Activated CD8-positive, alpha-beta T cell treated with anti-CD3 and anti-CD28 coated beads, Interleukin-2, amount 10 ng/mL, durations not matched to agents 7 days and 5 days (primary cell): ENCODE measurements at regions of chr12 and their contacts with region 1.

Region 1: GRCh38 chr12:6461401-6462233 is 8.9 kb downstream of the VAMP1 start:
- DNase-seq: peak; percentile 95
- ATAC-seq: peak; percentile 79
- H3K4me3 Mint-ChIP-seq: peak overlapping the region; percentile 71
- H3K27ac Mint-ChIP-seq: peak overlapping the region; percentile 99
- H3K4me1 Mint-ChIP-seq: peaks cover 92% of the 10 kb centered on the region
- H3K27me3 Mint-ChIP-seq: no peaks in the 10 kb centered on the region

Region 2: DNA sequence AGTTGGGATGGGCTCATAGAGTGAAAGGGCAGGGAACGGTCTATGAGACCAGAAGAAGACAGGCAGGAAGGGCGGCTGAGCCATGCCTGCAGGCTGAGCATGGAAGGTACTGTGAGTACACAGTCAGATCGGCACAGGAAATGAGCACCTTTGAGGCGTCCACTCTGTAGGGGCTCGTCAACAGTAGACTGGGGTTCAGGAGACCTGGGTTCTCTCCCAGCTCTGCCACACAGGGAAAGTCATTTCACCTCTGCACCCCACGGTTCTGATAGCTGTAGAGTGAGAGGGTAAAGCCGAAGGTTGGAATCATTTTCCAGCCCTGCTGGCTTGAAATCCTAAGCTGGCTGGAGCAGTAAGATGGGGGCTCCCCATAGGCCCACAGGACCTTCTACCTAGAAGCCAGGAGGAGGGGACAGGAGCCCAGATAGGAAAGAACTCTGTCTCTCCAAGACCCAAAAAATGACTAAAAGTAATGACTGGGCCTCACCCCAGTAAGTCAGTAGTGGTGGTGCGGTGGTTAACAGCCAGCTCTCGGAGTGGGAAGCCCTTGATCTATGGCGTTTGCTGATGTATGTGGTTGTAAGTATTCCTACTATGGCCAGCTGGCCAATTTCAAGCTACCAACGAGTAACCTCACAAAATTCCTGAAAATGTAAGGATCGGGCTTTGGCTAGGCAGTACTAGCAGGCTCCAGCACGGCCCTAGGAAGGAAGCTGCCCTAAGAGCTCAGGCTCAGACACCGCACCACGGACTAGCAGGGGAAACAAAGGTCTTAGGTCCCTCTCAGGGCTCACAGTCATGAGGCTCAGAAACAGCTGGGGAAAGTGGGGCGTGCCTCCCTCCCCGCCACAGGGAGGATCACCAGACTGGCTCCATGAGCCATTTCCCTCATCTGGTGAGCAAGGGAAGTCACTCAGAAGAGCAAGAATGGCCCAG is 27.1 kb before region 1 on chr12:
- CTCF ChIA-PET with region 1: interaction called, 39 read pairs
- POLR2A ChIA-PET with region 1: interaction called, 48 read pairs
- DNase-seq: peak; percentile 62
- ATAC-seq: peak; percentile 87
- H3K4me3 Mint-ChIP-seq: peak overlapping the region; percentile 50
- H3K27ac Mint-ChIP-seq: peak overlapping the region; percentile 91
- H3K4me1 Mint-ChIP-seq: peaks cover 54% of the 10 kb centered on the region
- H3K27me3 Mint-ChIP-seq: no peaks in the 10 kb centered on the region

Region 3: DNA sequence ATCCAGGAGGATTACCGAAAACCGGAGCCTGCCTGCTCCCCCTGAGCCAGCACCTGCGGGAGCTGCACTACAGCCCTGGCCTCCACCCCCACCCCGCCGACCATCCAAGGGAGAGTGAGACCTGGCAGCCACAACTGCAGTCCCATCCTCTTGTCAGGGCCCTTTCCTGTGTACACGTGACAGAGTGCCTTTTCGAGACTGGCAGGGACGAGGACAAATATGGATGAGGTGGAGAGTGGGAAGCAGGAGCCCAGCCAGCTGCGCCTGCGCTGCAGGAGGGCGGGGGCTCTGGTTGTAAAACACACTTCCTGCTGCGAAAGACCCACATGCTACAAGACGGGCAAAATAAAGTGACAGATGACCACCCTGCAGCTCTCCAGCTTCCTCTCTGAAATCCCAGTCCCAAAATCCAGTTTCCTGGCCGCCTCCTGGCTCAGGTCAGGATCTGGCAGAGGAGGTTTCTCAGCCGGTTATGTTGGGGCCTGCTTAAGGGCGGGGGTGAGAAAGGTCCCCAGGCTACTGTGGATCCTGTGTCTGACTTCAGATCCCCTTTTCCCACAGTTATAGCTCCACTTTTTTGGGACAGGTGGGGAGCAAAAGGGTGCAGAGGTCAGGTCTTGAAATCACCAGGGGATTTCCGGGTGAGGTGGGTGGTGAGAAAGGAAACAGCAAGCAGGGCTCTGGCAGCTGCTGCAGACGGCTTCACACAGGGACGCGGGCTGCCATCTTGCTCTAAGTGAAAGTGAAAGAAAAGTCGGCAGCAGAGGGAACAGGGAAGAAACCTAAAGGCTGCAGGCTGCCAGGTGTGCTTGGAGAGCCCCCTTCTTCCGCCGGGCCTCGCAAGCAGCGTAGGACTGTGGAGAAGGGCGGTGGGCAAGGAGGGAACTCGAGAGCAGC is 10.0 kb before region 1 on chr12 and contains the start of gene TAPBPL:
- CTCF ChIA-PET with region 1: interaction called, 64 read pairs
- POLR2A ChIA-PET with region 1: interaction called, 103 read pairs
- DNase-seq: peak; percentile 88
- ATAC-seq: peak; percentile 85
- H3K4me3 Mint-ChIP-seq: peak within 1 kb of the TSS; percentile 99
- H3K27ac Mint-ChIP-seq: peak within 1 kb of the TSS; percentile 99
- H3K4me1 Mint-ChIP-seq: peaks cover 78% of the 10 kb centered on the region
- H3K27me3 Mint-ChIP-seq: no peaks in the 10 kb centered on the region
- total RNA-seq, gene TAPBPL: 31.2 to 32.5 TPM

Region 4: DNA sequence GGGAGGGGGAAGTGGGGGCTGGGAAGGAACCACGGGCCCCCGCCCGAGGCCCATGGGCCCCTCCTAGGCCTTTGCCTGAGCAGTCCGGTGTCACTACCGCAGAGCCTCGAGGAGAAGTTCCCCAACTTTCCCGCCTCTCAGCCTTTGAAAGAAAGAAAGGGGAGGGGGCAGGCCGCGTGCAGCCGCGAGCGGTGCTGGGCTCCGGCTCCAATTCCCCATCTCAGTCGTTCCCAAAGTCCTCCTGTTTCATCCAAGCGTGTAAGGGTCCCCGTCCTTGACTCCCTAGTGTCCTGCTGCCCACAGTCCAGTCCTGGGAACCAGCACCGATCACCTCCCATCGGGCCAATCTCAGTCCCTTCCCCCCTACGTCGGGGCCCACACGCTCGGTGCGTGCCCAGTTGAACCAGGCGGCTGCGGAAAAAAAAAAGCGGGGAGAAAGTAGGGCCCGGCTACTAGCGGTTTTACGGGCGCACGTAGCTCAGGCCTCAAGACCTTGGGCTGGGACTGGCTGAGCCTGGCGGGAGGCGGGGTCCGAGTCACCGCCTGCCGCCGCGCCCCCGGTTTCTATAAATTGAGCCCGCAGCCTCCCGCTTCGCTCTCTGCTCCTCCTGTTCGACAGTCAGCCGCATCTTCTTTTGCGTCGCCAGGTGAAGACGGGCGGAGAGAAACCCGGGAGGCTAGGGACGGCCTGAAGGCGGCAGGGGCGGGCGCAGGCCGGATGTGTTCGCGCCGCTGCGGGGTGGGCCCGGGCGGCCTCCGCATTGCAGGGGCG is 72.5 kb after region 1 on chr12 and contains the start of gene GAPDH:
- CTCF ChIA-PET with region 1: interaction called, 14 read pairs
- POLR2A ChIA-PET with region 1: interaction called, 23 read pairs
- DNase-seq: peak; percentile 94
- ATAC-seq: peak; percentile 62
- H3K4me3 Mint-ChIP-seq: peak within 1 kb of the TSS; percentile 99
- H3K27ac Mint-ChIP-seq: peak within 1 kb of the TSS; percentile 100
- H3K4me1 Mint-ChIP-seq: peaks cover 59% of the 10 kb centered on the region
- H3K27me3 Mint-ChIP-seq: no peaks in the 10 kb centered on the region
- total RNA-seq, gene GAPDH: 6,175 to 6,471 TPM